Sigmoid colon (tissue), 7 donors: ENCODE measurements at regions of chr13 and their contacts with region 1.

Region 1: GRCh38 chr13:33017323-33017929 is 1.2 kb downstream of the KL start:
- DNase-seq: peak; percentile 84
- H3K4me3 ChIP-seq: peak overlapping the region; percentile 47 to 74 (median 62)
- H3K27ac ChIP-seq: peak overlapping the region; percentile 75 to 79 (median 77)
- H3K4me1 ChIP-seq: peaks cover 0 to 21% (median 12%) of the 10 kb centered on the region in 4 donors
- H3K27me3 ChIP-seq: no peaks in the 10 kb centered on the region
- CTCF ChIP-seq: peak; percentile 22 to 60 (median 51)
- EP300 ChIP-seq: no peak
- POLR2A ChIP-seq: no peak

Region 2: GRCh38 chr13:32639502-32640105 is 377.8 kb before region 1 on chr13:
- intact Hi-C with region 1: loop called (anchors 10 kb)
- DNase-seq: peak; percentile 77
- H3K4me3 ChIP-seq: no peak overlapping the region
- H3K27ac ChIP-seq: no peak overlapping the region
- H3K4me1 ChIP-seq: peaks cover 0 to 37% (median 16%) of the 10 kb centered on the region in 4 donors
- H3K27me3 ChIP-seq: no peaks in the 10 kb centered on the region
- CTCF ChIP-seq: peak; percentile 64 to 77 (median 74)
- EP300 ChIP-seq: no peak
- POLR2A ChIP-seq: no peak

Region 3: GRCh38 chr13:32707471-32707870 is 310.0 kb before region 1 on chr13:
- intact Hi-C with region 1: loop called (anchors 10 kb)
- DNase-seq: no peak
- H3K4me3 ChIP-seq: no peak overlapping the region
- H3K27ac ChIP-seq: no peak overlapping the region
- H3K4me1 ChIP-seq: no peaks in the 10 kb centered on the region
- H3K27me3 ChIP-seq: no peaks in the 10 kb centered on the region
- CTCF ChIP-seq: no peak
- EP300 ChIP-seq: no peak
- POLR2A ChIP-seq: no peak

Region 4: GRCh38 chr13:32850316-32851052 is 166.9 kb before region 1 on chr13:
- intact Hi-C with region 1: no loop called
- DNase-seq: no peak
- H3K4me3 ChIP-seq: no peak overlapping the region
- H3K27ac ChIP-seq: no peak overlapping the region
- H3K4me1 ChIP-seq: no peaks in the 10 kb centered on the region
- H3K27me3 ChIP-seq: no peaks in the 10 kb centered on the region
- CTCF ChIP-seq: no peak
- EP300 ChIP-seq: no peak
- POLR2A ChIP-seq: no peak

Region 5: DNA sequence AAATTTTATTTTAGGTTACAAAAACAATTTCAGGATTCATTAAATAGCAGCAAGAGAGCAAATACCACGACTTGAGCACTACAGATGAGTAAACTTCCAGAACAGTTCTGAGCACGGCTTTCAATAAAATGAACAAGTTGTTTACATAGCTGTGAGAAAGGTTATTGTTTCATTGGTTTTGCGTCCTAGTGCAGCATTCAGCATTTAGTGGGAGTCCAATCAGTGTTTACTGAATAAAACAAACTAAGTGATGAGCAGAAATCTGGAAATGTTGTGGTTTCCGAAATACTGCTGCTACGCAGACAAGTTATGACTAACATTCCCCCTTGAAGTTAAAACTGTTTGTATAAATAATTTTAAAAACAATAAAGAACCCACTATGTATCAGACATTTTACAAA is 519.6 kb after region 1 on chr13:
- intact Hi-C with region 1: loop called (anchors 10 kb)
- DNase-seq: no peak
- H3K4me3 ChIP-seq: peak overlapping the region in 3 of 4 donors; percentile 5 to 8 (median 8)
- H3K27ac ChIP-seq: peak overlapping the region; percentile 18 to 96 (median 93)
- H3K4me1 ChIP-seq: peaks cover 0 to 72% (median 55%) of the 10 kb centered on the region in 4 donors
- H3K27me3 ChIP-seq: no peaks in the 10 kb centered on the region
- CTCF ChIP-seq: no peak
- EP300 ChIP-seq: no peak
- POLR2A ChIP-seq: no peak